Testis (tissue), 5 donors: ENCODE measurements at regions of chr9 and their contacts with region 1.

Region 1: DNA sequence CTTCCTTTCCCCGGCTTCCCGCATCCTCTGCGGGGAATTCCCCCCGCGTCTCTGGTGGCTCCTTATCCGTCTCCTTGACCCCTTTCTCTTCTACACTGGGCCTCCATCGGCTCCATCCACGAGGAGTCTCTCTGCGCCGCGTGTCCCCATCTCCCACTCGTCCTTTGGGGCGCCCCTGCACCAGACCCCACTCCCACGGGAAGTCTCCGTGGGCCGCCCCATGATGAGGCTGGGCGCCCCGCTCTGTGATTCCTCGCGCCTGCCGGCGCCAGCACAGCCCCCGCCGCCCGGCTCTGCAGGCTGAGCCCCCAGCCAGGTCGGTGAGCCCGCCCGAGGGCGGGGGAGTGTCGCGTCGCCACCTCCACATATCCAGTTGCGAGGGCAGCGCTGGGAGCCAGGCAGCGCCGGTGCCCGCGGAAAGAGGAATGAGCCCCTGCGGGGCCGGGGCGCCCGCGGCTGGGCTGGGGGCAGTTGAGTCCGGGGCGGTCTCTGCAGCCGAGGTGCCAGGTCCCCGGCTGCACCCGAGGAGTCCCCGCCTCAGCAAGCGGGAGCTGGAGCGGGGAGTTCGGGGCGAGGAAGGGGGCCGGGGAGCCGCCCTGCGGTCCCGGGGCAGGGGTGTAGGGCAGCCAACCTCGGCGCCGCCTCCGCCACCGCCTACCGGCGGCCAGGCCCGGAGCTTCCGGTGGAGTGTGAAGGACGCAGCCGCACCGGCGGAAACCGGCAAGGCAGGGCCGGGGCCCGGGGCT is 2.1 kb upstream of the TRAF1 start:
- DNase-seq: peak; percentile 74
- H3K4me3 ChIP-seq: peak overlapping the region; percentile 73 to 84
- H3K27ac ChIP-seq: peak overlapping the region; percentile 82 to 89
- H3K4me1 ChIP-seq: peaks cover 16% of the 10 kb centered on the region
- H3K27me3 ChIP-seq: no peaks in the 10 kb centered on the region
- CTCF ChIP-seq: peak in 1 of 3 experiments; percentile 43
- POLR2A ChIP-seq: no peak

Region 2: DNA sequence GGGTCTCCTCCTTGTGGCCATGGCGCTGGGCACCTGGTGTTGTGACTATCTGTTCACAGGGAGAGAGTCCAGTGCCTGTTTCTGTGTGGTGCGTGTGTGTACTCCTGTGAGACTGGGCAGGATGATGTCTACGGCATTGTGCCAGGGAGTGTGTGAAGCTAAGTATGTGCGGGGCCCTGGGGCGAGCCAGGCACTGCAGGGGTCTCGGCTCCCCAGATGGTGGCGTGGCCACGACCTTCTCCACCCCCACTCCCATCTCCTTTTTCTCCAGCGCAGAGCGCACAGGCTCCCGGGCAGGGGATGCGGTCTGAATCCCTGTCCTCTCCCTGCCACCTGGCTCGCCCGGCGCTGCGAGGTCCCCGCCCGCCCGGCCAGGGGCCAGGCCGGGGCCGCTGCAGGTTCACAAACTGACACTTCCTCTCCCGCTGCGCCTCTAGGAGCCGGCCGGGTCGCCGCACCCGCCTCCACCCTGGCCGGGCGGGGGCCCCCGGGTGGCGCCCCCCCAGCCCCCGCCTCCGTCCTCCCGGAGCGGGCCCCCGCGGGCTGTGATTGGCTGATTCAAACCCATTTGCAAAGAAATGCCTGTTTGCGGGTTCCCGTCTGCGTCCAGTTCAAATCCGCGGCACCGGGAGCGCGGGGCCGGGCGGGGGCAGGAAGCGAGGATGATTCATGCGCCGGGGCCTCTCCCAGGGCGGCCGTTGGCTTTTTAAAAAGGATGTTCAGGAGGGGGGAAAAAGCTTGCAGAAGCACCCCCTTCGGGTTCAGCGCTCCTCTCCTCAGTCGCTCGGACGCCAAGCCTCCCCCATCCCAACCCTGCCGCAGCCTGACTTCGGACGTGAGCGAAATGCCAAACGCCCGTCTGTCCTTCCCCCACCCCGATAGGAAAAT is 52.5 kb before region 1 on chr9:
- intact Hi-C with region 1: loop called (anchors 5 kb)
- DNase-seq: peak; percentile 79
- H3K4me3 ChIP-seq: peak overlapping the region; percentile 64 to 69
- H3K27ac ChIP-seq: peak overlapping the region; percentile 85 to 94
- H3K4me1 ChIP-seq: peaks cover 4% of the 10 kb centered on the region
- H3K27me3 ChIP-seq: no peaks in the 10 kb centered on the region
- CTCF ChIP-seq: no peak
- POLR2A ChIP-seq: no peak

Region 3: DNA sequence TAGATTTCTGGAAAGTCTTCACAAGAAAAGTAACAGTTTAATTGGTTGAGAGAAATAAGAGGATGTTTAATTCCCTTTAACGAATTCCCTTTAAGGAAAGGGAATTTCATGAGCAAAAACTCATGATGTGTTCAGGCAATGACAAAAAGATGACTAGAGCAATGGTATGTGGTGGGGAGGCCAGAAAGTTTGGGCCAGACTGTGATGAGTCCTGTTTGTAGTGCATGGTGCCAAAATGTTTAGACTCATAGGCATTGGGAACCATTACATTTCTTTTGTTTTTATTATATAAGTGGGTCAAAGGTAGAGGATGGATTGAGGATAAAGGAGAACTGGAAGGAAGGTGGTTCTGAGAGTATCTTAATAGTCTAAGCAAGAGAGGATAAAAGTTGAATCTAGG is 157.0 kb after region 1 on chr9:
- intact Hi-C with region 1: no loop called
- DNase-seq: no peak
- H3K4me3 ChIP-seq: no peak overlapping the region
- H3K27ac ChIP-seq: no peak overlapping the region
- H3K4me1 ChIP-seq: no peaks in the 10 kb centered on the region
- H3K27me3 ChIP-seq: no peaks in the 10 kb centered on the region
- CTCF ChIP-seq: no peak
- POLR2A ChIP-seq: no peak